Spleen (tissue), 13 donors: ENCODE measurements at regions of chr2 and their contacts with region 1.

Region 1: GRCh38 chr2:235595422-235596010 is 101.7 kb downstream of the AGAP1 start:
- DNase-seq: peak; percentile 47
- H3K4me3 ChIP-seq: no peak overlapping the region
- H3K27ac ChIP-seq: no peak overlapping the region
- H3K4me1 ChIP-seq: peaks cover 0 to 17% (median 7%) of the 10 kb centered on the region in 6 donors
- H3K27me3 ChIP-seq: peaks cover 0 to 8% (median 0%) of the 10 kb centered on the region in 7 donors
- CTCF ChIP-seq: peak; percentile 46 to 81 (median 71)
- POLR2A ChIP-seq: no peak

Region 2: DNA sequence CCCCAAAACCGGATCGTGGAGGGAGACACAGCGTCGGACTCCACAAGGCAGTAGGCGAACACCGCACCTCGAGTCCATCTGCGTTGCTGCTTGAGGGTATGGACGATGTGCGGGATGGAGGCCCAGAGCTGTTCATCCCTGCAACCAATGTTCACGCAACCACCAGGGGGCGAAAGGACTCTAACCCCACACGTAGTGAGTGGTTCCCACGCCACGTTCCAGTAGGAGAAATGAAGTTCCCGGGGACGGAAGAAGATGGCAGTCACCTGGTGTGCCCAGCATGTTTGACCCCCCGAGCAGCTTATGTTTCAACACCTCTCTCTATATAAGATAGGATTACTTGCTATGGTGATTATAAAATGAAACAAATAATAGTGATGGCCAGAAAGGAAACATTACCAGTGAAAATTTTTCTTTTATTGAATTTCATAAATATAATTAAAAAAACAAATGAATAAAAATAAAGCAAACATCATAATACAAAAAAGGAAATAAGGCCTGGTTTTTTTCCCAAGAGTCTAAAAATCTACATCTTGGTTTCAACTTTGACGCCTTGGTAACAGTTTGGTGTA is 459.4 kb before region 1 on chr2:
- intact Hi-C with region 1: loop called (anchors 5 kb)
- DNase-seq: no peak
- H3K4me3 ChIP-seq: no peak overlapping the region
- H3K27ac ChIP-seq: no peak overlapping the region
- H3K4me1 ChIP-seq: peaks cover 0 to 13% (median 3%) of the 10 kb centered on the region in 6 donors
- H3K27me3 ChIP-seq: peaks cover 0 to 29% (median 0%) of the 10 kb centered on the region in 7 donors
- CTCF ChIP-seq: peak in 10 of 11 experiments; percentile 24 to 74 (median 56)
- POLR2A ChIP-seq: no peak

Region 3: DNA sequence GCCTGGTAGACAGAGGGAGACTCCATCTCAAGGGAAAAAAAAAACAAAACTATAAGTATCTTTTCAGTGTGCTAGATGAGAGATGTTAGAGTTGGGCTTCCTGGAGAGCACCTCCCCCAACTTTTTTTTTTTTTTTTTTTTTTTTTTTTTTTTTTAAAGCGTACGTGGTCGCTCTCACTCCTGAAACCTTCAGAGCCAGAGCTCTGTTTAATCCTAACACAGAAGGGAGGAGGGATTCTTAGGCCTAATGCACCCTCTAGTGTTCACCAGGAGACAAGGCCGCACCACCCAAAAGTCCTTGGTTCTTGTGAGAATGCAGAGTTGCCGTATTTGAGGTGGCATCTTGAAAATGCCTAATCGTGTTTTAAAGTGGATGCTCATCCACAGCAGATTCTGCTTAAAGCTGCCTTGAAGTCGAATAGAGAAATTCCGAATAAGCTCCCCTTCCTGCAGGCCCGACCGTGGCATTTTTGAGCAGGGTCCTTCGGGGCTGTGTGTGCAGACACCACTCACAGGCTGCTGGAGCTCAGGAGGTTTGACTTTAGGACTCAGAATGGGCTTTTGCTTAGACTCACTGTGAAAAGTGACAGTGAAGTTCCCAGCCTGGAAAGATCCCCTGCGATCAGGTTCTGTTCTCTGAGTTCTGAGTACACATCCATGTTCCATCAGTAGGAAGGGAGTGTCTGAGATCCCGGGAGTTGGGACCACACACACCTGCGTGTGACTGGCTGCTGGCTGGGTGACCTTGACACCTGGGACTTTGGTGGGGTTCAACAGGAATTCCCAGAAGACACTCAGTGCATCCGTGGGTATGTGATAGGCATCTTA is 151.0 kb after region 1 on chr2:
- intact Hi-C with region 1: loop called (anchors 1 kb)
- DNase-seq: no peak
- H3K4me3 ChIP-seq: no peak overlapping the region
- H3K27ac ChIP-seq: no peak overlapping the region
- H3K4me1 ChIP-seq: peaks cover 0 to 8% (median 0%) of the 10 kb centered on the region in 6 donors
- H3K27me3 ChIP-seq: peaks cover 0 to 8% (median 0%) of the 10 kb centered on the region in 7 donors
- CTCF ChIP-seq: peak; percentile 31 to 80 (median 74)
- POLR2A ChIP-seq: no peak